ENCODE measurements at regions of chr6 and their contacts with region 1.

Region 1: DNA sequence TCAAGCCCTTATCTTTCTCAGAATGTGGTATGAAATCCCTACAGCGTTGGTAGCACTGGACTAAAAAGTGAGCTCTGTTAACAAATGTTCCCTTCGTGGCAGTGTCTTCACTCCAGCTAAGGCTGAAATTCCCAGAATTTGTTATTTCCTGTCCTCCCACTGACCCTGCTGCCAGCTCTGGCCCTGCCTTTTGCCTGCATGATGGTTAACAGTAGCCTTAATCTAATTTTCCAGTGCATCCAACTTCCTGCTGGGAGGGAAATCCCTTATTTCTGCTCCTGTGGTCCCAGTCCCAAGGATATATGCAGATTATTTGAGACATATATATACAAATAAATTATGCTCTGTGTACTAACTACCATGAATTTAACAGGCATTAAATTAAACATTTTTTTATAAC is 157.2 kb upstream of the CARMIL1 start:
- DNase-seq: no peak
- H3K4me3 Mint-ChIP-seq: no peak overlapping the region
- H3K27ac Mint-ChIP-seq: no peak overlapping the region
- H3K4me1 Mint-ChIP-seq: peaks cover 72% of the 10 kb centered on the region
- H3K27me3 Mint-ChIP-seq: no peaks in the 10 kb centered on the region

Region 2: GRCh38 chr6:24876499-24877465 is 245.2 kb before region 1 on chr6:
- intact Hi-C with region 1: no loop called
- DNase-seq: no peak
- H3K4me3 Mint-ChIP-seq: no peak overlapping the region
- H3K27ac Mint-ChIP-seq: peak overlapping the region; percentile 79
- H3K4me1 Mint-ChIP-seq: peaks cover 45% of the 10 kb centered on the region
- H3K27me3 Mint-ChIP-seq: no peaks in the 10 kb centered on the region

Region 3: GRCh38 chr6:25107218-25107617 is 14.8 kb before region 1 on chr6:
- intact Hi-C with region 1: loop called (anchors 2 kb)
- DNase-seq: no peak
- H3K4me3 Mint-ChIP-seq: no peak overlapping the region
- H3K27ac Mint-ChIP-seq: peak overlapping the region; percentile 26
- H3K4me1 Mint-ChIP-seq: peaks cover 60% of the 10 kb centered on the region
- H3K27me3 Mint-ChIP-seq: no peaks in the 10 kb centered on the region

Region 4: DNA sequence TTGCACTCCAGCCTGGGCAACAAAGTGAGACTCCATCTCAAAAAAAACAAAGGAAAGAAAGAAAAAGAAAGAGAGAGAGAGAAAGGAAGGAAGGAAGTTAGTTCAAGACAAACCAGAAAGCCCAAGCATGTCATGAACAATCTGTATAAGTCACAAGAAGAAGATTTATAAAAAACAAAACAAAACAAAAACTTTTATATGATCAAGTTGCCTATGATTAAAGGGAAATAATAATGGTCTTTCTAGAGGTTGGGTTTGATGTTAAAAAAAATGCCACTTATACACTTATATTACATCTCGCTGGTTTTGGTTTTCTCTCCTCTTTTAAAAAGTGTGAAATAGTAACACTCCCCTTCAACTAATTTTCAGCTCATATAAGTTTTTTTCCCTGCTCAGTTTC is 10.9 kb after region 1 on chr6:
- intact Hi-C with region 1: loop called (anchors 1 kb)
- DNase-seq: no peak
- H3K4me3 Mint-ChIP-seq: peak overlapping the region; percentile 78
- H3K27ac Mint-ChIP-seq: peak overlapping the region; percentile 11
- H3K4me1 Mint-ChIP-seq: peaks cover 58% of the 10 kb centered on the region
- H3K27me3 Mint-ChIP-seq: no peaks in the 10 kb centered on the region

Measured in activated T-helper 1 cell treated with anti-CD3 and anti-CD28 coated beads, Interleukin-12 subunit alpha, Interleukin-12 subunit beta, Interleukin-2, Interleukin-4 antibody, amounts not matched to agents 30 ng/mL and 10 ng/mL and 1 ng/mL, durations not matched to agents 14 hours and 24 hours and 36 hours (primary cell).